Right lobe of liver (tissue), 6 donors: ENCODE measurements at regions of chr1 and their contacts with region 1.

Region 1: DNA sequence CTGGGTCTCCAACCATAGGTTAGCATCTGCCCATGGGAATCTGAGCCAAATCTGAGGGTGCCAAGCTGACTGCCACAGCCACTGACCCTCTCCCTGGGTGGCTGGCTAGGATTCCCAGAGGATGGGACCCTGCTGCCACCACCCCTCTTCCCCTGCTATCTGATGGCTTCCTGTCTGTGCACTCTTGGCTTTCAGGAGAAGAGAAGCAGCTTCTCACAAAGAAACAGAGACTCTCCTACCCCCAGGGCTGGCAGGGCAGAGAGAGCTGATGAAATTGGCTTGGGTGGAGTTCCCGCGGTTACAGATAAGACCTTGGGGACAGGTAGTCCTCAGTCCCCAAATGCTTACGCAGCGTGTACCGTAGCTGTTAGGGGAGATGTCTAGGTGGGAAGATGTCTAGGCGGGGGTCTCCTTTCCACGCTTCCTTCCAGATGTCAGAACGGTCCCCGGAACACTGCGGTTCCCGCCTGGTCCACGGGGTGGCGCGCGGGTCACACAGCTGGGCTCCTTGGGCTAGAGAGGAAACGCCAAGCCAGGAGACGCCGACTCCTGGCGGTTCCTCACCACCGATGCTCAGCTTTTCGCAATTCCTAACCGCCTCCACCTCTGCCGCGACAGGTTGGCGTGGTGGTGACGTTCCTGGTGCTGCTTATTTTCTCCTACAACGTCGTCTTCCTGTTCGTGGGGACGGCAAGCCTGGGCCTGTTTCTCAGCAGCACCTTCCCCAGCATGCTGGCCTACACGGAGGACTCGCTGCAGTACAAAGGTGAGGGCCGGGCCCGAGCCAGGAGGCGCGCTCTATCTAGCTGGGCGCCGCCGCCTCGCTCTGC is 40.1 kb downstream of the ELK4 start:
- DNase-seq: peak; percentile 83 to 85 (median 85)
- ATAC-seq: peak; percentile 97 to 99 (median 98)
- H3K4me3 ChIP-seq: peak overlapping the region; percentile 28 to 57 (median 56)
- H3K27ac ChIP-seq: peak overlapping the region in 1 of 3 donors; percentile 41
- H3K4me1 ChIP-seq: no peaks in the 10 kb centered on the region
- H3K27me3 ChIP-seq: no peaks in the 10 kb centered on the region
- CTCF ChIP-seq: peak; percentile 95 to 99 (median 98)
- POLR2A ChIP-seq: no peak

Region 2: DNA sequence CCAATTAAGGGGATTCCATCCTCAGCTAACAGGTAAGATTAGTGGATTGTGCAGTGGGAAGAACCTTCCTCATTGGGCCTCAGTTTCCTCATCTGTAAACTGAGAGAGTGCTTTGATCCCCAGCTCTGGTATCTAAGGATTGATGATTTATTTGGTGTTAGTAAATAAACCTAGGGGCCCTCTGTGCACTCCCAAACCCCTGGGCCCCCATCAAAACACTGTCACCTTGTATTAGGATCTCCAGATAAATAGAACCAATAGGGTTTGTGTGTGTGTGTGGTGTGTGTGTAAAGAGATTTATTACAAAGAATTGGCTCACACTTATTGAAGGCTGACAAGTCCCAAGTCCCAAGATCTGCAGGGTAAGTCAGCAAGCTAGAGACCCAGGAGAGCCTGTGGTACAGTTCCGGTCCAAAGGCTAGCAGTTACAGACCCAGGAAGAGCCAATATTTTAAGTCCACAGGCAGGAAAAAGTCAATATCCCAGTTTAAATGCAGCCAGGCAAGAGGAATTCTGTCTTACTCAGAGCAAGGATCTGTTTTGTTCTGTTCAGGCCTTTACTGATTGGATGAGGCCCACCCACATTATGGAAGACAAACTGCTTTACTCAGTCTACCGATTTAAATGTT is 51.1 kb after region 1 on chr1:
- intact Hi-C with region 1: loop called in 1 of 2 experiments (anchors 5 kb)
- DNase-seq: no peak
- ATAC-seq: peak; percentile 26 to 48 (median 42)
- H3K4me3 ChIP-seq: no peak overlapping the region
- H3K27ac ChIP-seq: peak overlapping the region in 1 of 3 donors; percentile 57
- H3K4me1 ChIP-seq: peaks cover 0 to 66% (median 23%) of the 10 kb centered on the region in 4 donors
- H3K27me3 ChIP-seq: no peaks in the 10 kb centered on the region
- CTCF ChIP-seq: no peak
- POLR2A ChIP-seq: no peak

Region 3: DNA sequence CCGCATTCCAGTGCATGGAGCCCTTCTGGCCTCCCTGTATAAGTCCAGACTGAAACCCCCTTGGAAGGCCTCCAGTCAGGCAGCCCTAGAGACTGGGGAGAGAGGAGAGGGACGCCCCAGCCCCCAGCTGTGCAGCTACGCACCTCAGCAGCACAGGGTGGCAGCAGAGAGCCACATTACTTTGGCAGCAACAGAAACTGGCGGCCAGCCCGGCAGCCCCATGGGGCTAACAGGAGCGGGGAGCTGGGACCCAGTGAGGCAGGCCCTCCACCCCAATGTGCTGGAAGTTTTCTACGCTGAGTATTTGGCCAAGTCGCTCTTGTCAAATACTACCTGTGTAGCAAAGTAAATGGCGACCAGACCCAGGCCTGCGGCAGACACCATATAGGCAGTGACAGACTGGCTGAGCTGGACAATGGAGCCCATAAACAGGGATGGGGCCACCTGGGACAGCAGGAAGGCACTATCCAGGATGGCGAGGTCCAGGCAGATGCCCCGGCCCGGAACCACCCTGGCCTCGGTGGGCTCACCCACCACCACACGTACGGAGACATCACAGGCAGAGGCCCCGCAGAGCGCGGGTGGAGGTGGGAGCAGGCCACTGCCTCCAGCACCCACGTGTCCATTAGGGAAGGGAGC is 67.3 kb after region 1 on chr1:
- intact Hi-C with region 1: loop called (anchors 5 kb)
- DNase-seq: peak; percentile 83 to 86 (median 83)
- ATAC-seq: peak; percentile 83 to 85 (median 84)
- H3K4me3 ChIP-seq: no peak overlapping the region
- H3K27ac ChIP-seq: peak overlapping the region in 1 of 3 donors; percentile 33
- H3K4me1 ChIP-seq: peaks cover 0 to 49% (median 7%) of the 10 kb centered on the region in 4 donors
- H3K27me3 ChIP-seq: no peaks in the 10 kb centered on the region
- CTCF ChIP-seq: peak; percentile 89 to 95 (median 90)
- POLR2A ChIP-seq: no peak

Region 4: GRCh38 chr1:205832326-205832751 is 240.6 kb after region 1 on chr1:
- intact Hi-C with region 1: no loop called
- DNase-seq: no peak
- ATAC-seq: peak; percentile 40 to 82 (median 70)
- H3K4me3 ChIP-seq: no peak overlapping the region
- H3K27ac ChIP-seq: no peak overlapping the region
- H3K4me1 ChIP-seq: no peaks in the 10 kb centered on the region
- H3K27me3 ChIP-seq: no peaks in the 10 kb centered on the region
- CTCF ChIP-seq: no peak
- POLR2A ChIP-seq: no peak